Activated CD4-positive, alpha-beta T cell treated with anti-CD3 and anti-CD28 coated beads for 36 hours (primary cell): ENCODE measurements at regions of chr11 and their contacts with region 1.

Region 1: GRCh38 chr11:77047007-77047927 is 13.1 kb downstream of the B3GNT6 start:
- DNase-seq: peak; percentile 82
- ATAC-seq: peak; percentile 95
- H3K4me3 Mint-ChIP-seq: peak overlapping the region; percentile 64
- H3K27ac Mint-ChIP-seq: peak overlapping the region; percentile 62
- H3K4me1 Mint-ChIP-seq: peaks cover 12% of the 10 kb centered on the region
- H3K27me3 Mint-ChIP-seq: no peaks in the 10 kb centered on the region

Region 2: DNA sequence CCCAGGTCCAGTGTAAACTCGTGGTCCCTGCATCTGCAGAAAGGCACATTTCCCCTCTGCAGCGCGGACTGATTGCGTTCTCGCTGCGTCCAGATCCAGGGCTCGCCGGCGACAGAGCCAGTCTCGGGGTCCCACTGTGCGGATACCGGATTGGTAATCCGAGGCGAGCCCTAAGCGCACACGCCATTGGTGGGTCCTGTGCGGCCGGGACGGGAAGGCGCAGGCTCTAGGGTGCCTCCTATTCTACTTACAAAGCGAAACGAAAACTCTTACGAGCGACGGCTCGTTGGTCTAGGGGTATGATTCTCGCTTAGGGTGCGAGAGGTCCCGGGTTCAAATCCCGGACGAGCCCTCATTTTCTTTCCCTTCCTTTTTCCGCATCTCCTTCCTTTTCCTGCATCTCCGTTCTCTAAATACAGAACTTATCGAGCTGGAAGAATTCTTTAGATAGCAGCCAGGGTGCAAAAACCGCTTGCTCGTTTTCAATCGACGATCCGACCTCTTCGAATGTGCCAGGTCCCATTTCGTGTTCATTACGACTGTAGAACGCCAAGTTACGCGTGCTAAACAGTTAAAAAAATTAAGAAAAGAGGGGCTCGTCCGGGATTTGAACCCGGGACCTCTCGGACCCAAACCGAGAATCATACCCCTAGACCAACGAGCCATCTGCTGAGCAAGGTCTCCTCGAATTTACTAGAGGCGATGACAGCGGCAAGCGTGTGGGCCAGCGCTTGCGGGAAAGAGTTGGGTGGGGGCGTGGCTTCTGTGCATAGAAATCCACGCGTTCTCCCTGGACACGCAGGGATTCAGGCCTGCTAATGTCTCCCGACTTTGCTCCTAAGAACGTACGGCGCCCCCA is 811.8 kb before region 1 on chr11:
- CTCF ChIA-PET with region 1: no interaction called
- POLR2A ChIA-PET with region 1: no interaction called
- intact Hi-C with region 1: loop called in 1 of 2 experiments (anchors 5 kb)
- DNase-seq: peak; percentile 94
- ATAC-seq: peak; percentile 91
- H3K4me3 Mint-ChIP-seq: peak overlapping the region; percentile 83
- H3K27ac Mint-ChIP-seq: peak overlapping the region; percentile 94
- H3K4me1 Mint-ChIP-seq: peaks cover 49% of the 10 kb centered on the region
- H3K27me3 Mint-ChIP-seq: peaks cover 3% of the 10 kb centered on the region

Region 3: GRCh38 chr11:76807206-76807875 is 239.9 kb before region 1 on chr11:
- CTCF ChIA-PET with region 1: no interaction called
- POLR2A ChIA-PET with region 1: no interaction called
- intact Hi-C with region 1: loop called (anchors 1 kb)
- DNase-seq: peak; percentile 91
- ATAC-seq: peak; percentile 21
- H3K4me3 Mint-ChIP-seq: no peak overlapping the region
- H3K27ac Mint-ChIP-seq: no peak overlapping the region
- H3K4me1 Mint-ChIP-seq: peaks cover 31% of the 10 kb centered on the region
- H3K27me3 Mint-ChIP-seq: peaks cover 12% of the 10 kb centered on the region

Region 4: DNA sequence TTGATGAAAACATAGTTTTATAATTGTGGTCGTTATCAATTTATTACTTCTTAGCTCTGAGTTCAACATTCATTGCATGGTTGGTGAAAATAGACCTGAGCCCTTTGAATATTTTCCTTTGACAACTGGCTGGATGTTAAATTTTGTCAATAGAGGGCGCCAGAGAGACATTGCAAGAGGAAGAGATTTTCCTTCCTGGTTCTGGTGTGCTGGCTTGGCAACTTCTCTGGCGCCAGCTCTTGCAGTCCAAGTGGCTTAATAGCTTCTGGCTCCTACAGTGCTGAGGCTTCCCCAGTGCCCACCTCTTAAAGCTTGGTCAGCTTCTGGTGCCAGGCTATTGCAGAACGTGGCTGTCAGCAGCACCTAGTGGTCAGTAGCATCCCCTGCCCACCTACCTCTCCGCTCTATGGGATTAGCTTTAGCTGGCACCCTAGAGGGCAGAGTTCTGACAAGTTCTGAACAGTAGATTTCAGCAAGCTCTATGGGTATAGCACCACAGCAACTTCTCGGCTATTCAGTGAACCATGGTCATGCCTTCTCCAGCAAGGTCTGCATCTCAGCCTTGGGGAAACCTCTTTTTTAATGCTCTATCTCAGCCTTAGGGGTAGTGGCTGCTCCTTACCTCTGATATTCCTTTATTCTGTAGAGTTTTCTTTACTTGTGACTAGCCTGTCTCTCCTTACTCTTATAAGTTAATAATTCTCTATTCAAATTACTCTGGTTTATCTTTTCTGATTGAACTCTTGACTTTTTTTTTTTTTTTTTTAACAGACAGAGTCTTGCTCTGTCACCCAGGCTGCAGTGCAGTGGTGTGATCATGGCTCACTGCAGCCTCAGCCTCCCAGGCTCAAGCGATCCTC is 127.2 kb before region 1 on chr11:
- CTCF ChIA-PET with region 1: interaction called, 6 read pairs
- POLR2A ChIA-PET with region 1: no interaction called
- intact Hi-C with region 1: loop called (anchors 1 to 5 kb)
- DNase-seq: peak; percentile 73
- ATAC-seq: peak; percentile 80
- H3K4me3 Mint-ChIP-seq: no peak overlapping the region
- H3K27ac Mint-ChIP-seq: no peak overlapping the region
- H3K4me1 Mint-ChIP-seq: no peaks in the 10 kb centered on the region
- H3K27me3 Mint-ChIP-seq: no peaks in the 10 kb centered on the region

Region 5: DNA sequence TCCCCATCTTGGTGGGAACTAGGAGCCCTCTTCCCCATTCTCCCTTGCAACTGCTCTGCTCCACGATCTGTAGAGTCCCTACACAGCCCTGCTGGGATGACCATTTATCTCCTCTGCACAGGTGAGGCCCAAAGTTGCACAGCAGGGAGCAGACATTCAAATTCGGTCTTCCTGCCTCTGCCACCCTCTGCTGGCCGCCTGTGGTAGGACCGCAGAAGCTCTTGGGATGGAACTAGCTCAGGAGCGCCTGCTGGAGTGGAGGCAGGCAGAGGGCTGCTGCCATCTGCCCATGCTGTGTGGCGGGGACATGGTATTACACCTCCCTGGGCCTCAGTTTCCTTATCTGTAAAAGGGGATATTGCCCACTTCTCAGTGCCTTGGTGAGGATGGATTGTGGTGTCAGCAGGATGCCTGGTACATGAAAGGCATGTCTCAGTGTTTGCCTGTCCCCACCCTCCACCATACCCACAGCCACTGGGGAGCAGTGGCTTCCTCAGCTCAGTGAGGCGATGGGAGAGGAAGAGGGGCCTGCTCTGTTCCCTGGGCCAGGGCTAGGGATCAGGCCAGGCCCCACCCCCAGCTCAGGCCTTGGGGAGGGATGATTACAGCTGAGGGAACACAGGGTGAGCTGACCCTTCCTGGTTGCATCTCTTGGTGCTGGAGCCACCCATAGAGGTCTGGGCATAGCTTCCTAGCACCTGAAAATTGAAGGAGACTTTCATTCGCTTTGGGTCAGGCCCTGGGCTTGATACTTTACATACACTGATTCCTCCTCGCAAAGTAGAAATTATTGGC is 44.1 kb after region 1 on chr11:
- CTCF ChIA-PET with region 1: interaction called, 64 read pairs
- POLR2A ChIA-PET with region 1: no interaction called
- intact Hi-C with region 1: loop called (anchors 1 kb)
- DNase-seq: peak; percentile 90
- ATAC-seq: peak; percentile 99
- H3K4me3 Mint-ChIP-seq: no peak overlapping the region
- H3K27ac Mint-ChIP-seq: no peak overlapping the region
- H3K4me1 Mint-ChIP-seq: peaks cover 4% of the 10 kb centered on the region
- H3K27me3 Mint-ChIP-seq: no peaks in the 10 kb centered on the region

Region 6: DNA sequence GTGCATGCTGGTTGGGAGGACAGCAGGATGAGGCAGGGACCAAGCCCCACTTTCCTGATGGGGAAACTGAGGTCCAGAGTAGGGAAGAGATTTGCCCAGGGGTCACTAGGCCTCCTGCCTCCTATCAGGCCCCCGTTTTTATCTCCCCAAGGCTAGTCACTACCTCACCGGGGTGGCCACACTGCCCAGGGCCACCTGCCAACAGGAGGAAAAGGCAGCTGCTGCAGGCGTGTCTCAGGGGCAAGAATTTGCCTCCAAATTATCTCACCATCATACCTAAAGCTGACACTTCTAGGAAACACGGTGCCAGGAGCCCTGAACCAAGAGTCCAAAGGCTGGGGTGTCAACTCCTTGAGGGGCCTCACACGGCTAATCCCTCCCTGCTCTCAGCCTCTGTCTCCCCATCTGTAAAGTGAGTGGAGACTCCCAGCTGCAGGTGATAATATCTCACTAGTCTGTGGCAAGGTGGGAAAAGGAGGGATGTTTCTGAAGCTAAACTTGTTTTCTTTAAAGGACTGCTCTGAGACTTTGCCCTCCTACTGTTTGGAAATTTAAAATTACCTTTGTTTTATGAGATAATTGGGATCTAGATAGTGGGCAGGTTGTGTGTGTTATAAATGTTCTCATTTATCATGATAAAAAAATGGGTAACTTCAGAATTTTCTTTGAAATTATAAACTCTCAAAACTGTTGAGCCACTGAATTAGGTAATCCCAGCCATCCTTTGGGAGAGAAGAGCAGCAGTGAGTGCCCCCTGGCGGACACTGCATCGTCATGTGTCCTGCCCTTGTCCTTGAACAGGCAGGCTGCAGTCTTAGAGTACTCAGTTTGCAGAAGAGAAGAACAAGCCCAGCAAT is 140.7 kb after region 1 on chr11:
- CTCF ChIA-PET with region 1: interaction called, 4 read pairs
- POLR2A ChIA-PET with region 1: no interaction called
- intact Hi-C with region 1: loop called in 1 of 2 experiments (anchors 1 kb)
- DNase-seq: peak; percentile 86
- ATAC-seq: peak; percentile 71
- H3K4me3 Mint-ChIP-seq: no peak overlapping the region
- H3K27ac Mint-ChIP-seq: no peak overlapping the region
- H3K4me1 Mint-ChIP-seq: peaks cover 3% of the 10 kb centered on the region
- H3K27me3 Mint-ChIP-seq: no peaks in the 10 kb centered on the region